CD4-positive, alpha-beta memory T cell (primary cell): ENCODE measurements at regions of chr16 and their contacts with region 1.

Region 1: DNA sequence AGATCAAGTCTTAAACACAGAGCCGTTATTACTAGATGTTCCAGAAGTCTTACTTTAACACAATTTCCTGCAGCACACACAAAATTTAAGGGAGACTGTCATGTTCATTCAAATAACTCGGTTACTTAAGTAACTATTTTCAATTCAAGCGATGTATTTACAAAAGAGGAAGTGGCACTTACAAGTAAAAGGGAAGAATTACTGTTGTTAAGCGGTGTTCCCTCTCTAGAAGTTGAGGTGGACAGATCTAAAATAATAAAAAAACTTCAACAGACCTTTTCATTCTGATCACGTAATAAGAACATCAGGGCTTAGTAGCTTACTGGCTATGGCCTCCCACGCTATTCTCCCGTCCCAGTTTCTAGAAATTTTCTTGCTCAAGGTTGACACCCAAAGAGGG is 26.2 kb upstream of the TXNDC11 start:
- DNase-seq: no peak
- H3K4me3 ChIP-seq: no peak overlapping the region
- H3K4me3 Mint-ChIP-seq: peak overlapping the region in 3 of 8 donors; percentile 6 to 31 (median 30)
- H3K27ac ChIP-seq: no peak overlapping the region
- H3K27ac Mint-ChIP-seq: peak overlapping the region in 6 of 7 donors; percentile 14 to 71 (median 37)
- H3K4me1 ChIP-seq: peaks cover 4% of the 10 kb centered on the region
- H3K4me1 Mint-ChIP-seq: peaks cover 5 to 11% (median 7%) of the 10 kb centered on the region in 4 donors
- H3K27me3 ChIP-seq: no peaks in the 10 kb centered on the region
- H3K27me3 Mint-ChIP-seq: no peaks in the 10 kb centered on the region

Region 2: GRCh38 chr16:11783319-11784037 is 14.6 kb after region 1 on chr16:
- CTCF ChIA-PET with region 1: interaction called, 3 read pairs
- POLR2A ChIA-PET with region 1: interaction called, 20 read pairs
- intact Hi-C with region 1: no loop called
- DNase-seq: peak; percentile 79 to 88 (median 84)
- H3K4me3 ChIP-seq: peak overlapping the region; percentile 58 to 87
- H3K4me3 Mint-ChIP-seq: peak overlapping the region; percentile 82 to 90 (median 86)
- H3K27ac ChIP-seq: peak overlapping the region; percentile 96
- H3K27ac Mint-ChIP-seq: peak overlapping the region; percentile 97 to 100 (median 98)
- H3K4me1 ChIP-seq: peaks cover 75% of the 10 kb centered on the region
- H3K4me1 Mint-ChIP-seq: peaks cover 42 to 66% (median 53%) of the 10 kb centered on the region in 4 donors
- H3K27me3 ChIP-seq: no peaks in the 10 kb centered on the region
- H3K27me3 Mint-ChIP-seq: no peaks in the 10 kb centered on the region

Region 3: GRCh38 chr16:11843861-11844260 is 75.0 kb after region 1 on chr16:
- CTCF ChIA-PET with region 1: no interaction called
- POLR2A ChIA-PET with region 1: no interaction called
- intact Hi-C with region 1: loop called (anchors 2 kb)
- DNase-seq: no peak
- H3K4me3 ChIP-seq: no peak overlapping the region
- H3K4me3 Mint-ChIP-seq: no peak overlapping the region
- H3K27ac ChIP-seq: no peak overlapping the region
- H3K27ac Mint-ChIP-seq: peak overlapping the region in 2 of 7 donors; percentile 42 to 57
- H3K4me1 ChIP-seq: peaks cover 8% of the 10 kb centered on the region
- H3K4me1 Mint-ChIP-seq: peaks cover 2 to 22% (median 12%) of the 10 kb centered on the region in 4 donors
- H3K27me3 ChIP-seq: no peaks in the 10 kb centered on the region
- H3K27me3 Mint-ChIP-seq: no peaks in the 10 kb centered on the region